ENCODE measurements at regions of chr17 and their contacts with region 1.

Region 1: GRCh38 chr17:50114849-50115357 is 15.1 kb downstream of the SAMD14 start:
- DNase-seq: peak; percentile 63 to 69
- H3K4me3 ChIP-seq: no peak overlapping the region
- H3K4me3 Mint-ChIP-seq: no peak overlapping the region
- H3K27ac Mint-ChIP-seq: no peak overlapping the region
- H3K4me1 ChIP-seq: peaks cover 24% of the 10 kb centered on the region
- H3K4me1 Mint-ChIP-seq: no peaks in the 10 kb centered on the region
- H3K27me3 ChIP-seq: no peaks in the 10 kb centered on the region
- H3K27me3 Mint-ChIP-seq: no peaks in the 10 kb centered on the region
- CTCF ChIP-seq: peak; percentile 63 to 84

Region 2: GRCh38 chr17:49926886-49927285 is 188.0 kb before region 1 on chr17:
- CTCF ChIA-PET with region 1: no interaction called
- POLR2A ChIA-PET with region 1: no interaction called
- intact Hi-C with region 1: no loop called
- DNase-seq: no peak
- H3K4me3 ChIP-seq: no peak overlapping the region
- H3K4me3 Mint-ChIP-seq: no peak overlapping the region
- H3K27ac Mint-ChIP-seq: no peak overlapping the region
- H3K4me1 ChIP-seq: peaks cover 24% of the 10 kb centered on the region
- H3K4me1 Mint-ChIP-seq: peaks cover 14% of the 10 kb centered on the region
- H3K27me3 ChIP-seq: no peaks in the 10 kb centered on the region
- H3K27me3 Mint-ChIP-seq: no peaks in the 10 kb centered on the region
- CTCF ChIP-seq: no peak

Region 3: DNA sequence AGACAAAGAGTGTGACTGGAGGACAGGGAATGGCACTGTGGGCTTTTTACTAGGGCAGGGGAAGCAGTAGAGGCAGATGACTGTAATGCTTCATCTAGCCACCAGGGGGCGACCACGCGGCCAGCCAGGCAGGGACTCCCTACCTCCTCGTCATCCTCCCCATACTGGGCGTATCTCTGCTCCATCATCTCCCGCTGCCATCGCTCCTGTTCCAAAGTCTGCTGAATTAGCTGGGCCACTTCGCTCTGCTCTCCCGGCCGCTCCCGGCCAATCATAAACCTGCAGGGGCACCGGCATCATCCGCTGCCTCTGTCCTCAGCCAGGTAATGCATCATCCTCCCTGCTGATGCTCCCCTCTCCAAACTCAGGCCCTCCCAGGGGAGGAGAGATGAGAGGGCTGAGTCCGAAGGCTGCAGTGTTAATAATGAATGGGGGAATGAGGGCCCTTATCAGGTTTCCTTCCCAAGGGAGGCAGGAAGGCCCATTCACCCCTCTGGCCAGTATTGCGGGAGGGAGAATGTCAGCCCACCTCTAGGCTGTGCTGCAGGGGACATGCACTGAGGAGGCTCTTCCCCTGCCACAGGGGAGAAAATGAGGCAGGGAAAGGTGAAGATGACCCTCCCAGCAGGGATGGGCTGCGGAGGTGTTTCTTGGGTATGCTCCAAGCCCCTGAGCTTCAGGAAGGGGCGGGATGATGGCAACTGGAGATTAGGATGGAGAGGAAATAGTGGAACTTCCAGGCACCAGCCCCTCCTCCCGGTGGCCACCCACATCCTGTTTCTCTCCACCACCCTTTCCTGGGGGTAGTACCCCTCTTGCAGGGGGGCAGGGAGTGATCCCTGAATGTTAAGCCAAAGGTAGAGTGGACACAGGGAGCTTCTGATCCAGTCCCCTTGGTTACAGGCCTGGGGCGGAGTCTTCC is 25.3 kb after region 1 on chr17:
- CTCF ChIA-PET with region 1: interaction called, 13 read pairs
- POLR2A ChIA-PET with region 1: no interaction called
- intact Hi-C with region 1: no loop called
- DNase-seq: peak; percentile 89 to 93
- H3K4me3 ChIP-seq: no peak overlapping the region
- H3K4me3 Mint-ChIP-seq: no peak overlapping the region
- H3K27ac Mint-ChIP-seq: no peak overlapping the region
- H3K4me1 ChIP-seq: no peaks in the 10 kb centered on the region
- H3K4me1 Mint-ChIP-seq: peaks cover 4% of the 10 kb centered on the region
- H3K27me3 ChIP-seq: no peaks in the 10 kb centered on the region
- H3K27me3 Mint-ChIP-seq: no peaks in the 10 kb centered on the region
- CTCF ChIP-seq: peak; percentile 99 to 100

Region 4: GRCh38 chr17:50161023-50161910 is 46.4 kb after region 1 on chr17:
- CTCF ChIA-PET with region 1: interaction called, 8 read pairs
- POLR2A ChIA-PET with region 1: no interaction called
- intact Hi-C with region 1: loop called (anchors 1 kb)
- DNase-seq: peak; percentile 96 to 100
- H3K4me3 ChIP-seq: peak overlapping the region; percentile 48
- H3K4me3 Mint-ChIP-seq: peak overlapping the region; percentile 67
- H3K27ac Mint-ChIP-seq: peak overlapping the region; percentile 2
- H3K4me1 ChIP-seq: peaks cover 17% of the 10 kb centered on the region
- H3K4me1 Mint-ChIP-seq: peaks cover 13% of the 10 kb centered on the region
- H3K27me3 ChIP-seq: no peaks in the 10 kb centered on the region
- H3K27me3 Mint-ChIP-seq: peaks cover 9% of the 10 kb centered on the region
- CTCF ChIP-seq: peak; percentile 99 to 100

Region 5: GRCh38 chr17:50244771-50245170 is 129.9 kb after region 1 on chr17:
- CTCF ChIA-PET with region 1: no interaction called
- POLR2A ChIA-PET with region 1: no interaction called
- intact Hi-C with region 1: no loop called
- DNase-seq: no peak
- H3K4me3 ChIP-seq: no peak overlapping the region
- H3K4me3 Mint-ChIP-seq: no peak overlapping the region
- H3K27ac Mint-ChIP-seq: no peak overlapping the region
- H3K4me1 ChIP-seq: no peaks in the 10 kb centered on the region
- H3K4me1 Mint-ChIP-seq: no peaks in the 10 kb centered on the region
- H3K27me3 ChIP-seq: no peaks in the 10 kb centered on the region
- H3K27me3 Mint-ChIP-seq: no peaks in the 10 kb centered on the region
- CTCF ChIP-seq: no peak